ENCODE measurements at regions of chr6 and their contacts with region 1.

Region 1: DNA sequence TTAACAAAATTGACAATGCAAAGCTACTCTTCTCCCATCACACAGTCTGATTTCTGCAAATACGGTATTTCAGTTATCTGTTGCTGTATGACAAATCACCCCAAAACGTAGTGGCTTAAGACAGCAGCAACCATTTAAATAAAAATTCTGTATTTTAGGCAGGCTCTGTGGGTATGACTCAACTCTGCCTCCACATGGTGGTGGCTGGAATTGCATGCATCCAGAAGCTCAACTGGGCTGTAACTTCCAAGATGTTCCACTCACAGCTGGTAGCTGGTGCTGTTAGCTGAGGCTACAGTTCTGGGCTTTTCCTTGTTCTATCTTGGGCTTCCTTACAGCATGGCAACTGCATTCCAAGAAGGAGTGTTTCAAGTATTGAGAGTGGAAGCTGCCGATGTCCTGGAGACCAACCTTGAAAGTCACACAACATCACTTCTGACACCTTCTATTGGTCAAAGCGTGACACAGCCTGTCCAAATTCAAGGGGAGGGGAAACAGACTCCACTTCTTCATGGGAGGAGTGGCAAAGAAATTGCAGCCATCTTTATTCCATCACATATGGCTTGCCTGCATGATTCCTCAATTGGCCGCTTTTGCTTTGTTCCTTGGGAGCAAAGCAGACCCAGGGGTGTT is 39.7 kb upstream of the TULP1 start:
- DNase-seq: peak; percentile 78
- ATAC-seq: peak; percentile 53
- H3K4me3 Mint-ChIP-seq: no peak overlapping the region
- H3K27ac Mint-ChIP-seq: no peak overlapping the region
- H3K4me1 Mint-ChIP-seq: no peaks in the 10 kb centered on the region
- H3K27me3 Mint-ChIP-seq: peaks cover 14% of the 10 kb centered on the region

Region 2: GRCh38 chr6:35391240-35391968 is 161.0 kb before region 1 on chr6:
- CTCF ChIA-PET with region 1: no interaction called
- DNase-seq: no peak
- ATAC-seq: no peak
- H3K4me3 Mint-ChIP-seq: no peak overlapping the region
- H3K27ac Mint-ChIP-seq: peak overlapping the region; percentile 68
- H3K4me1 Mint-ChIP-seq: peaks cover 66% of the 10 kb centered on the region
- H3K27me3 Mint-ChIP-seq: no peaks in the 10 kb centered on the region

Region 3: GRCh38 chr6:35522660-35523658 is 29.4 kb before region 1 on chr6:
- CTCF ChIA-PET with region 1: interaction called, 73 read pairs
- DNase-seq: peak; percentile 88
- ATAC-seq: peak; percentile 91
- H3K4me3 Mint-ChIP-seq: peak overlapping the region; percentile 56
- H3K27ac Mint-ChIP-seq: peak overlapping the region; percentile 73
- H3K4me1 Mint-ChIP-seq: peaks cover 17% of the 10 kb centered on the region
- H3K27me3 Mint-ChIP-seq: peaks cover 5% of the 10 kb centered on the region

Region 4: GRCh38 chr6:35532126-35532525 is 20.3 kb before region 1 on chr6:
- CTCF ChIA-PET with region 1: interaction called, 73 read pairs
- DNase-seq: no peak
- ATAC-seq: no peak
- H3K4me3 Mint-ChIP-seq: no peak overlapping the region
- H3K27ac Mint-ChIP-seq: no peak overlapping the region
- H3K4me1 Mint-ChIP-seq: peaks cover 3% of the 10 kb centered on the region
- H3K27me3 Mint-ChIP-seq: peaks cover 16% of the 10 kb centered on the region

Region 5: DNA sequence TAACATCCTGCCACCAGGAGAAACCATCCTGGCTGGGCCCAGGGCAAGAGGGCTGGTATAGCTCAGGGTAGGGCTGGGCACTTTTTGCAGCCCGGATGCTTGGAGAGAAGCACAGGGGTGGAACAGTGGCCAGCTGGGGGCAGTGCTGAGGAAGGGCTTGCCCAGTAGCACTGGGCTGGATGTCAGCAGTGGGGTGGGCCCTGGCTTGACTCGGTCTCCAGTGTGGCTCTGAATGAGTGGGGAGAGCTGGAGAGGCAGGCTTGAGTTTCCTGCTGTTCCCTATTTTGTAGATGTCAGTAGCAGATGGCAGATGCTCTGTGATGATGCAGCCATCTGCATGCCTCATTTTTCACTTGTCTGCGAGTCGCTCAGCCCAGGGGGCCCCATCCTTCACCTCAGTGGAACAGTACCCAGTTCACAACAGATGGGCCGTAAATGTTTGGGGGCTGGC is 16.6 kb after region 1 on chr6:
- CTCF ChIA-PET with region 1: interaction called, 13 read pairs
- DNase-seq: peak; percentile 57
- ATAC-seq: peak; percentile 75
- H3K4me3 Mint-ChIP-seq: no peak overlapping the region
- H3K27ac Mint-ChIP-seq: no peak overlapping the region
- H3K4me1 Mint-ChIP-seq: no peaks in the 10 kb centered on the region
- H3K27me3 Mint-ChIP-seq: peaks cover 22% of the 10 kb centered on the region

Measured in activated CD8-positive, alpha-beta memory T cell treated with anti-CD3 and anti-CD28 coated beads, Interleukin-2, amount 10 ng/mL, durations not matched to agents 7 days and 5 days (primary cell).